ENCODE measurements at regions of chr1 and their contacts with region 1.

Region 1: DNA sequence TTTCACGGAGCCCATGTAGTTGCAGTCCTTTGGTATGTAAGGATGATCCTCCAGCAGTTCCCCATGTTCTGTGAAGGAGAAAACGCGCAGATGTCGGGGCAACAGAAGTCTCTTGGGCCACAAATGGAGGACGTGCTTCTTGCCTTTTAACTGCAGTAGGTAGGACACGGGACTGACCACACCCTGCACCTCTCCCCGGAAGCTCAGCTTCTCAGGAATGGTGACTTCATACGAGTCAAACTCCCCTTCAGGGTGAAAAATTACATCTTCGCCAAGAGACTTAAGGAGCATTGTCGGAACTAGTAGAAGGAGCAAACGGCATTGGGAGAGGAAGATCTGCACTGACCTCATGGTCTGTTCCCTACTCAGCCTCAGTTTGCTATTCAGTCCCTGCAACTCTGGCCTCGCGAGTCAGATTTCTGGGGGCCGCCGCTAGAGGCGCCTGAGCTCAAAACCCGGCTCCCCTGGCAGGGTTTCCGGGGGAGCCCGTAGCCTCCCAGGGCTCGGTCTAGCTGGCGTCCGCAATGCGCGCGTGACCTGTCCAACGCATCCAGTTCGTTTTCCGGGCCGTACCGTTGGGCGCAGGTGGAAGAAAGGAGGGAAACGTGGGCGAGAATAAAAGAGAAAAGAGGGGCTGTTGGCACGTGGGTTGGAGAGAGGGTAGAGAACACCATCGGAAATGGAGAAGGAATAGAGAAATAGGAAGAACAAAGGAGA is at the start of gene ADAM30:
- DNase-seq: peak; percentile 74
- ATAC-seq: peak; percentile 98
- H3K4me3 Mint-ChIP-seq: peak within 1 kb of the TSS; percentile 55
- H3K27ac Mint-ChIP-seq: no peak within 1 kb of the TSS
- H3K4me1 Mint-ChIP-seq: peaks cover 5% of the 10 kb centered on the region; the same call in 1 of the 2 replicates
- H3K27me3 Mint-ChIP-seq: peaks cover 2% of the 10 kb centered on the region; the same call in 1 of the 2 replicates
- CTCF ChIP-seq: no peak; the same call in 1 of the 2 replicates
- total RNA-seq, gene ADAM30: not detected in 3 replicates

Region 2: GRCh38 chr1:119758584-119758983 is 137.6 kb before region 1 on chr1:
- CTCF ChIA-PET with region 1: no interaction called
- POLR2A ChIA-PET with region 1: no interaction called
- DNase-seq: no peak
- ATAC-seq: no peak
- H3K4me3 Mint-ChIP-seq: no peak overlapping the region
- H3K27ac Mint-ChIP-seq: no peak overlapping the region
- H3K4me1 Mint-ChIP-seq: peaks cover 7% of the 10 kb centered on the region
- H3K27me3 Mint-ChIP-seq: no peaks in the 10 kb centered on the region
- CTCF ChIP-seq: no peak

Region 3: GRCh38 chr1:119870917-119871596 is 25.1 kb before region 1 on chr1:
- CTCF ChIA-PET with region 1: interaction called, 18 read pairs
- POLR2A ChIA-PET with region 1: no interaction called
- DNase-seq: peak; percentile 97
- ATAC-seq: peak; percentile 98
- H3K4me3 Mint-ChIP-seq: no peak overlapping the region
- H3K27ac Mint-ChIP-seq: no peak overlapping the region
- H3K4me1 Mint-ChIP-seq: peaks cover 4% of the 10 kb centered on the region
- H3K27me3 Mint-ChIP-seq: peaks cover 6% of the 10 kb centered on the region
- CTCF ChIP-seq: peak; percentile 93

Region 4: GRCh38 chr1:119878171-119878570 is 18.0 kb before region 1 on chr1:
- CTCF ChIA-PET with region 1: interaction called, 15 read pairs
- POLR2A ChIA-PET with region 1: no interaction called
- DNase-seq: no peak
- ATAC-seq: no peak
- H3K4me3 Mint-ChIP-seq: no peak overlapping the region
- H3K27ac Mint-ChIP-seq: no peak overlapping the region
- H3K4me1 Mint-ChIP-seq: no peaks in the 10 kb centered on the region
- H3K27me3 Mint-ChIP-seq: no peaks in the 10 kb centered on the region
- CTCF ChIP-seq: no peak

Region 5: DNA sequence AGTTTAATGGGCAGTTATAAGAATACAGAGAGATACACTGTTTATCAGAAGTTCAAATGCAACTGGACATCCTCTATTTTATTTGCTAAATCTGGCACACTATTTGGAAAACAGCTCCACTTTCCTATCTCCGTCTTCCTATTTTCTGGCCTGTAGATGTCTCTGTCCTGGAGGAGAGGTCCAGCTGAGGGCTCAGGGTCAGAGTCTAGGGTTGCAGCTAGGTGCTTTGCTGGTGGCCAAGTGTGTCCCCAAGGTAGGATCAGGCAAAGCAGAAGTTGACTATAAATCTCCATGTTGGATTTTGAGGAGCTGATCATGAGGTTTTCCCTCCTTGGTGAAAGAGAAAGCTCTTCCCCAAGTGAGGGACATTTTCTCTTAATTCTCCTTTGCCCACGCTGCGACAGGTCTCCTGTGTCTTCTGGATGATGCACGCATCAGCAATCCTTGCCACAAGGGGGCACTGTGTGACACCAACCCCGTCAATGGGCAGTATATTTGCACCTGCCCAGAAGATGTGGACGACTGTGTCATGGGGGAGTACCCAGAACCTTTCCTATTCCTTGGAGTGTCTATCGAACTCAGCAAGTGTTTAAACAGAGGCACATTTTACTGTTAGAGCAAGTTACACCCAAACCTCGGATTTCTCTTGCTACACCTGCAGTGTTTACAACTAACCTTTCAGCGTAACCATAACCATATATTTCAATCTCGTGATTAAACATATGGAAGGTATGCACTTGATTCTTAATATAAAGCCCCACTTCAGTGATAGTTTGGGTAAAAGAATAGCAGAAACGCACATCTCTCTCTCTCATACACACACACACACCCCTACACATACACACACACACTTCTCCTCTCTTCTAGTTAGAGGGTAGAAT is 10.0 kb before region 1 on chr1:
- CTCF ChIA-PET with region 1: interaction called, 40 read pairs
- POLR2A ChIA-PET with region 1: no interaction called
- DNase-seq: peak; percentile 81
- ATAC-seq: peak; percentile 92
- H3K4me3 Mint-ChIP-seq: no peak overlapping the region
- H3K27ac Mint-ChIP-seq: no peak overlapping the region
- H3K4me1 Mint-ChIP-seq: no peaks in the 10 kb centered on the region
- H3K27me3 Mint-ChIP-seq: no peaks in the 10 kb centered on the region
- CTCF ChIP-seq: peak; percentile 85

Region 6: GRCh38 chr1:119906927-119907652 is 10.9 kb after region 1 on chr1:
- CTCF ChIA-PET with region 1: interaction called, 17 read pairs
- POLR2A ChIA-PET with region 1: no interaction called
- DNase-seq: no peak
- ATAC-seq: no peak
- H3K4me3 Mint-ChIP-seq: no peak overlapping the region
- H3K27ac Mint-ChIP-seq: no peak overlapping the region
- H3K4me1 Mint-ChIP-seq: peaks cover 11% of the 10 kb centered on the region
- H3K27me3 Mint-ChIP-seq: peaks cover 6% of the 10 kb centered on the region
- CTCF ChIP-seq: no peak

Region 7: GRCh38 chr1:119937198-119937597 is 41.1 kb after region 1 on chr1:
- CTCF ChIA-PET with region 1: interaction called, 10 read pairs
- POLR2A ChIA-PET with region 1: no interaction called
- DNase-seq: no peak
- ATAC-seq: no peak
- H3K4me3 Mint-ChIP-seq: no peak overlapping the region
- H3K27ac Mint-ChIP-seq: no peak overlapping the region
- H3K4me1 Mint-ChIP-seq: peaks cover 13% of the 10 kb centered on the region
- H3K27me3 Mint-ChIP-seq: no peaks in the 10 kb centered on the region
- CTCF ChIP-seq: no peak